Naive thymus-derived CD4-positive, alpha-beta T cell (primary cell): ENCODE measurements at regions of chr6 and their contacts with region 1.

Region 1: GRCh38 chr6:170295510-170296422 is 4.9 kb upstream of the DLL1 start:
- DNase-seq: peak in 5 of 9 donors; percentile 34 to 54 (median 41)
- ATAC-seq: peak; percentile 58
- H3K4me3 ChIP-seq: peak overlapping the region; percentile 58
- H3K4me3 Mint-ChIP-seq: peak overlapping the region; percentile 56 to 97 (median 78)
- H3K27ac ChIP-seq: no peak overlapping the region
- H3K27ac Mint-ChIP-seq: peak overlapping the region in 1 of 9 donors; percentile 60
- H3K4me1 ChIP-seq: peaks cover 11 to 42% of the 10 kb centered on the region in 2 donors
- H3K4me1 Mint-ChIP-seq: peaks cover 11 to 46% (median 34%) of the 10 kb centered on the region in 7 donors
- H3K27me3 ChIP-seq: peaks cover 4 to 9% of the 10 kb centered on the region in 2 donors
- H3K27me3 Mint-ChIP-seq: peaks cover 13 to 80% (median 59%) of the 10 kb centered on the region in 5 donors

Region 2: GRCh38 chr6:169701954-169702839 is 593.6 kb before region 1 on chr6 and contains the starts of genes C6orf120 and WDR27:
- CTCF ChIA-PET with region 1: no interaction called
- POLR2A ChIA-PET with region 1: no interaction called
- intact Hi-C with region 1: loop called in 1 of 2 experiments (anchors 5 kb)
- DNase-seq: peak; percentile 91 to 98 (median 94)
- ATAC-seq: peak; percentile 93
- H3K4me3 ChIP-seq: peak within 1 kb of the TSS; percentile 95
- H3K4me3 Mint-ChIP-seq: peak within 1 kb of the TSS; percentile 89 to 94 (median 92)
- H3K27ac ChIP-seq: peak within 1 kb of the TSS; percentile 98
- H3K27ac Mint-ChIP-seq: peak within 1 kb of the TSS; percentile 88 to 96 (median 93)
- H3K4me1 ChIP-seq: peaks cover 22 to 36% of the 10 kb centered on the region in 2 donors
- H3K4me1 Mint-ChIP-seq: peaks cover 28 to 66% (median 55%) of the 10 kb centered on the region in 7 donors
- H3K27me3 ChIP-seq: no peaks in the 10 kb centered on the region
- H3K27me3 Mint-ChIP-seq: no peaks in the 10 kb centered on the region
- total RNA-seq, gene C6orf120: 16.0 to 38.1 (median 19.3) TPM
- total RNA-seq, gene WDR27: 22.7 to 89.0 (median 41.4) TPM

Region 3: GRCh38 chr6:169800668-169801395 is 494.9 kb before region 1 on chr6:
- CTCF ChIA-PET with region 1: no interaction called
- POLR2A ChIA-PET with region 1: no interaction called
- intact Hi-C with region 1: no loop called
- DNase-seq: no peak
- ATAC-seq: no peak
- H3K4me3 ChIP-seq: no peak overlapping the region
- H3K4me3 Mint-ChIP-seq: peak overlapping the region in 1 of 10 donors; percentile 16
- H3K27ac ChIP-seq: no peak overlapping the region
- H3K27ac Mint-ChIP-seq: no peak overlapping the region
- H3K4me1 ChIP-seq: peaks cover 13 to 25% of the 10 kb centered on the region in 2 donors
- H3K4me1 Mint-ChIP-seq: peaks cover 30 to 32% (median 31%) of the 10 kb centered on the region in 7 donors
- H3K27me3 ChIP-seq: no peaks in the 10 kb centered on the region
- H3K27me3 Mint-ChIP-seq: peaks cover 33 to 54% (median 42%) of the 10 kb centered on the region in 5 donors

Region 4: DNA sequence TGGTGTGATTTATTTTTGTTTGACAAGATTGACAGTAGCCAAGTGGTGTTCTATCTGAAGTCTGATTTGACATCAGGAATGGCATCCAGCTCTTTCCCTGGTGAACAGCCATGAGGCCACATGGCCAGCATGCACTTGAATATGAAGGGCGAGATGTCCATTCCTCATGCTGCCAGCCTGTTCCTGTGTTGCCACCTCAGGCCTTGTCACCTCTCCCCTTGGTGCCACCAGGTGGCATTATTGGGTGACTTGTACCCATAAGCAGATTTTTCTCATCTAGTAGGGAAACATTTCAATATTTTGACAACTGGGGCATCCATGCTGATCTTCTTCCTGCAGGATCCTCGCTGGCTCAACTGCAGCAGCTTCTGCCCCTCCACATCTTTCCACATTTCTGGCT is 345.2 kb before region 1 on chr6:
- CTCF ChIA-PET with region 1: interaction called, 29 read pairs
- POLR2A ChIA-PET with region 1: interaction called, 3 read pairs
- intact Hi-C with region 1: loop called (anchors 1 to 2 kb)
- DNase-seq: peak in 5 of 9 donors; percentile 15 to 44 (median 31)
- ATAC-seq: peak; percentile 41
- H3K4me3 ChIP-seq: no peak overlapping the region
- H3K4me3 Mint-ChIP-seq: no peak overlapping the region
- H3K27ac ChIP-seq: no peak overlapping the region
- H3K27ac Mint-ChIP-seq: no peak overlapping the region
- H3K4me1 ChIP-seq: no peaks in the 10 kb centered on the region
- H3K4me1 Mint-ChIP-seq: no peaks in the 10 kb centered on the region
- H3K27me3 ChIP-seq: peaks cover 0 to 2% of the 10 kb centered on the region in 2 donors
- H3K27me3 Mint-ChIP-seq: peaks cover 0 to 19% (median under 1%) of the 10 kb centered on the region in 5 donors

Region 5: GRCh38 chr6:170147832-170148708 is 147.7 kb before region 1 on chr6:
- CTCF ChIA-PET with region 1: no interaction called
- POLR2A ChIA-PET with region 1: no interaction called
- intact Hi-C with region 1: loop called in 1 of 2 experiments (anchors 2 kb)
- DNase-seq: peak in 6 of 9 donors; percentile 21 to 51 (median 40)
- ATAC-seq: peak; percentile 78
- H3K4me3 ChIP-seq: peak overlapping the region; percentile 54
- H3K4me3 Mint-ChIP-seq: peak overlapping the region; percentile 70 to 89 (median 82)
- H3K27ac ChIP-seq: peak overlapping the region; percentile 48
- H3K27ac Mint-ChIP-seq: peak overlapping the region; percentile 68 to 96 (median 89)
- H3K4me1 ChIP-seq: peaks cover 20 to 37% of the 10 kb centered on the region in 2 donors
- H3K4me1 Mint-ChIP-seq: peaks cover 31 to 70% (median 56%) of the 10 kb centered on the region in 7 donors
- H3K27me3 ChIP-seq: no peaks in the 10 kb centered on the region
- H3K27me3 Mint-ChIP-seq: peaks cover 0 to 26% (median 4%) of the 10 kb centered on the region in 5 donors

Region 6: GRCh38 chr6:170279977-170280688 is 15.6 kb before region 1 on chr6:
- CTCF ChIA-PET with region 1: interaction called, 5 read pairs
- POLR2A ChIA-PET with region 1: interaction called, 22 read pairs
- intact Hi-C with region 1: no loop called
- DNase-seq: peak in 5 of 9 donors; percentile 58 to 75 (median 61)
- ATAC-seq: peak; percentile 58
- H3K4me3 ChIP-seq: peak overlapping the region; percentile 57
- H3K4me3 Mint-ChIP-seq: peak overlapping the region; percentile 57 to 86 (median 80)
- H3K27ac ChIP-seq: peak overlapping the region; percentile 56
- H3K27ac Mint-ChIP-seq: peak overlapping the region; percentile 14 to 96 (median 86)
- H3K4me1 ChIP-seq: peaks cover 5 to 31% of the 10 kb centered on the region in 2 donors
- H3K4me1 Mint-ChIP-seq: peaks cover 9 to 48% (median 27%) of the 10 kb centered on the region in 7 donors
- H3K27me3 ChIP-seq: no peaks in the 10 kb centered on the region
- H3K27me3 Mint-ChIP-seq: peaks cover 0 to 54% (median 1%) of the 10 kb centered on the region in 5 donors

Region 7: GRCh38 chr6:170525795-170526194 is 230.0 kb after region 1 on chr6:
- CTCF ChIA-PET with region 1: no interaction called
- POLR2A ChIA-PET with region 1: no interaction called
- intact Hi-C with region 1: no loop called
- DNase-seq: no peak
- ATAC-seq: no peak
- H3K4me3 ChIP-seq: no peak overlapping the region
- H3K4me3 Mint-ChIP-seq: no peak overlapping the region
- H3K27ac ChIP-seq: no peak overlapping the region
- H3K27ac Mint-ChIP-seq: no peak overlapping the region
- H3K4me1 ChIP-seq: no peaks in the 10 kb centered on the region
- H3K4me1 Mint-ChIP-seq: peaks cover 0 to 8% (median 0%) of the 10 kb centered on the region in 7 donors
- H3K27me3 ChIP-seq: no peaks in the 10 kb centered on the region
- H3K27me3 Mint-ChIP-seq: peaks cover 0 to 26% (median 4%) of the 10 kb centered on the region in 5 donors

Region 8: DNA sequence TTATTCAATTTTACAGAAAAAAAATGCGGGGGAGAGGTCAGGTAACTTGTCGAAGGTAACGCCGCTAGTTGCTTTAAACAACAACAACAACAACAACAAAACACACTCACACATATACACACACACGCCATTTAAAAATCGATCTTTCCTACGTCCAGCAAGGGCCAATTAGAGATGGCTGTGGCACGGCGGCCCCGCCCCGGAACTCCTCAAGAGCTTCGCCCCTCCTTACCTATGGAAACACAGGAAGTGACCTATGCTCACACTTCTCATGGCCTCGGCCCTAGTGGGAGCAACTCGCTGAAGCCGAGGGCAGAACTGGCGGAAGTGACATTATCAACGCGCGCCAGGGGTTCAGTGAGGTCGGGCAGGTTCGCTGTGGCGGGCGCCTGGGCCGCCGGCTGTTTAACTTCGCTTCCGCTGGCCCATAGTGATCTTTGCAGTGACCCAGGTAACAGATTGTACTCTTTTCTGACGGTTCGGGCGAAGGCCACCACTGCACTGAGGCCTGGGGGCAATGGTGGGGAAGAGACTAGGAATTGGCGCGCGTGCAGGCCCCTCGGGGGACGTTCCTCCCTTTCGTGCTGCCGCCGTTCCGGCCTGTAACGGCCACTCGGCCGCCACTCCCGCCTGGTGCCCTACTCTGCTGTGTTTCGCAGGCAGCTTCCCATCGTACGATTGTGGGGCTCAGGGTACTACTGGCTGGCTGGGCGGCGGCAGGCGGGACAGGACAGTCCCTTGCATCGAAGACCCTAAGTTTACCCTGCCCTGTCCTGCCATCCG is 258.4 kb after region 1 on chr6 and contains the start of gene TBP:
- CTCF ChIA-PET with region 1: no interaction called
- POLR2A ChIA-PET with region 1: no interaction called
- intact Hi-C with region 1: loop called in 1 of 2 experiments (anchors 5 kb)
- DNase-seq: peak; percentile 90 to 99 (median 97)
- ATAC-seq: peak; percentile 95
- H3K4me3 ChIP-seq: peak within 1 kb of the TSS; percentile 91
- H3K4me3 Mint-ChIP-seq: no peak within 1 kb of the TSS
- H3K27ac ChIP-seq: peak within 1 kb of the TSS; percentile 93
- H3K27ac Mint-ChIP-seq: no peak within 1 kb of the TSS
- H3K4me1 ChIP-seq: peaks cover 38% of the 10 kb centered on the region in 2 donors
- H3K4me1 Mint-ChIP-seq: peaks cover 16 to 46% (median 30%) of the 10 kb centered on the region in 7 donors
- H3K27me3 ChIP-seq: no peaks in the 10 kb centered on the region
- H3K27me3 Mint-ChIP-seq: no peaks in the 10 kb centered on the region
- total RNA-seq, gene TBP: 13.8 to 28.3 (median 23.9) TPM